ENCODE measurements at regions of chr13 and their contacts with region 1.

Region 1: DNA sequence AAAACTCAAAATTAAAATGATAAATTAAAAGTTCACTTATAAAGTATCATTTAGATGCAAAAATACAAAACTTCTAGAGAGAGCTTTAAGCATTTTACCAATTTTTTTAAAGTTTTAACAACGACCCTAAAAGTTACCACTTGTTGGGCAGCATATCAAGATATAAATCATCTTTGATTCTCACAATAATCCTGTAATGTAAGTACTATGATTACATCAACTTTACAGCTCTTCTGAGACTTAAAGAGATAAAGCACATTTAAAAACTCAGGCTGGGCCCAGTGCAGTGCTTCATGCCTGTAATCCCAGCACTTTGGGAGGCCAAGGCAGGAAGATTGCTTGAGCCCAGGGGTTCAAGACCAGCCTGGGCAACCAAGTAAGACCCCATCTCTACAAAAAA is 202.7 kb upstream of the GPC6 start:
- DNase-seq: no peak
- H3K4me3 ChIP-seq: no peak overlapping the region
- H3K27ac ChIP-seq: no peak overlapping the region
- H3K4me1 ChIP-seq: no peaks in the 10 kb centered on the region
- H3K27me3 ChIP-seq: no peaks in the 10 kb centered on the region
- CTCF ChIP-seq: no peak
- EP300 ChIP-seq: no peak
- POLR2A ChIP-seq: no peak

Region 2: DNA sequence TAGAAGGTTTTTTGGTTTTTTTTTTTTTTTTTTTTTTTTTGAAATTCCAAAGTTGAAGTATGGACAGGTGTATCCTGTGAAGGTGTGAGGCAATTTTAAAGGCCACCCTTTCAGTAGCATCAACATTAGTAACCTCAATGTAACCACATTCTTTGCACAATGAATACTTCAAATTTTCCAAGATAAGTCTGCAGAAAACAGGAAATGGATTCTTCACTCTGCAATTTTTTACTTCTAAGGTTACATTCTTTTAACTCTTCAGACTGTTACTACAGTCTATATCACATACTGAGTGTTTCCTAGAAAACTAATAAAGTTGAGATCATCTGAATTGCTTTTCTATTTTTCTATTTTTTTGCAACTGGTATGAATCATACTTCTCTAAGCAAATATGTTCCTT is 366.4 kb before region 1 on chr13:
- in situ Hi-C with region 1: no loop called
- intact Hi-C with region 1: no loop called
- DNase-seq: no peak
- H3K4me3 ChIP-seq: no peak overlapping the region
- H3K27ac ChIP-seq: no peak overlapping the region
- H3K4me1 ChIP-seq: no peaks in the 10 kb centered on the region
- H3K27me3 ChIP-seq: no peaks in the 10 kb centered on the region
- CTCF ChIP-seq: no peak
- EP300 ChIP-seq: no peak
- POLR2A ChIP-seq: no peak

Region 3: DNA sequence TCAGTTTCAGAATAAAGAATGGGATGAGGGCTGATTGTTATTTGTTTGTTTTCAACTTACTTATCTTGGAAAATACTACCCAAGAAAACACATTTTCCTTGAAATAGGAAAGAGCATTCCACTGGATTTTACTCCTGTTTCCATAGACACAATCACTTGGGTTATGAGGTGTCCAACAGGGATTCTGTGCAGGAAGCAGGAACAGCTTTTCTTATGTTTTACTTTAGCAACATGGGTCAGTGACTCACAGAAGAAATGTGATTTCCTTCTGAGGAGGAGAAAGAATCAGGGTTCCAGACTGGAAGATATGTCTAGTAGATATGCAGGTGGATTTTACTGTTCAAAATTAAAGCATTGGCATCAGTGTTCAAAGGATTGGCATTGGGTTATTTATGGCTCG is 21.9 kb after region 1 on chr13:
- in situ Hi-C with region 1: no loop called
- intact Hi-C with region 1: no loop called
- DNase-seq: no peak
- H3K4me3 ChIP-seq: no peak overlapping the region
- H3K27ac ChIP-seq: no peak overlapping the region
- H3K4me1 ChIP-seq: no peaks in the 10 kb centered on the region
- H3K27me3 ChIP-seq: no peaks in the 10 kb centered on the region
- CTCF ChIP-seq: no peak
- EP300 ChIP-seq: no peak
- POLR2A ChIP-seq: no peak

Region 4: GRCh38 chr13:93144031-93144430 is 120.1 kb after region 1 on chr13:
- in situ Hi-C with region 1: no loop called
- intact Hi-C with region 1: no loop called
- DNase-seq: no peak
- H3K4me3 ChIP-seq: no peak overlapping the region
- H3K27ac ChIP-seq: no peak overlapping the region
- H3K4me1 ChIP-seq: peaks cover 0 to 6% (median 2%) of the 10 kb centered on the region in 4 donors
- H3K27me3 ChIP-seq: no peaks in the 10 kb centered on the region
- CTCF ChIP-seq: no peak
- EP300 ChIP-seq: no peak
- POLR2A ChIP-seq: no peak

Region 5: DNA sequence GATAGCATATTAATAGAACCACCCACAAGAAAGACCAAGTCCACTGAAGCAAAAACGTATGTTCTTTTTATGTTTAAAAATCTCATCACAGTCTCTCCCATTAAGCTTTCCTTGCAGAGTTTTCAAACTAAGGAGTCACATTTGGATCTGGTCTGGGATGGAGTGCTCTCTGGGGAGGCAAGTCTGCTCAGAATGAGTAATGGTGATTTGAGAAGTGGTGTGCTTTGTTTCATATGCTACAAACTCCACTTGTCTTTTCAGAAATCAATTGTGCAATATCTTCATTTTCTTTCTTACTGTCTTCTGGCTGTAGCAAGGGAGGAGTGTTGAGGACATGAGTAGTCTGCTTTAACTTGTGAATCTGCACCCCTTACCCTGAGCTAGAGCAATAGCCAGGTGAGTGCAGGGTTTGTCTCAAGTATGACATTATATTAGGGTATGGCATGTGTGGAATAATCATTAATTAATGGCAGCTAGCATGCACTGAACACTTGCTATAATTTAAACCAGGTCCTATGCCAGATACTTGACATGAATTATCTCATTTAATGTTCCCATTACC is 374.3 kb after region 1 on chr13:
- in situ Hi-C with region 1: no loop called
- intact Hi-C with region 1: loop called (anchors 5 kb)
- DNase-seq: no peak
- H3K4me3 ChIP-seq: no peak overlapping the region
- H3K27ac ChIP-seq: no peak overlapping the region
- H3K4me1 ChIP-seq: no peaks in the 10 kb centered on the region
- H3K27me3 ChIP-seq: no peaks in the 10 kb centered on the region
- CTCF ChIP-seq: no peak
- EP300 ChIP-seq: no peak
- POLR2A ChIP-seq: no peak